ENCODE measurements at regions of chr2 and their contacts with region 1.

Region 1: DNA sequence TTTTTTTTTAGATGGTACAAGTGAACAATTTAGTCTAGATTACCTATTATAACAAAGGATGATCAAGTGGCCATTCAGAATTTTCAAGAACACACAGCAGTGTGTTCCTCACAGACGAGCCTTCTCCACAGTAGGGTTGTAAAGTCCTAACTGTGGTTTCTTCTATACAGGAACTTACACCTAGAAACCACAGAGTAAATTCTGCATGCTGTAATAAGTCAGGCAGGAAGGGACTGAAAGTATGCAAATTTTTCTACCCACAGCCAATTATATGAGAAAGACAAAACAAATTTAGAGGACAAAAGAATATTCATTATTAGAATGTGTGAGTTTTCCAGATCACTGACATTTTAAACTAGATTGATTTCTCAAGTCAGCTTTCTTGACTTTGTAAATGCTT is 99.5 kb downstream of the RBMS1 start:
- DNase-seq: no peak
- H3K4me3 Mint-ChIP-seq: peak overlapping the region; percentile 25
- H3K27ac Mint-ChIP-seq: peak overlapping the region; percentile 64
- H3K4me1 Mint-ChIP-seq: peaks cover 58% of the 10 kb centered on the region
- H3K27me3 Mint-ChIP-seq: no peaks in the 10 kb centered on the region

Region 2: DNA sequence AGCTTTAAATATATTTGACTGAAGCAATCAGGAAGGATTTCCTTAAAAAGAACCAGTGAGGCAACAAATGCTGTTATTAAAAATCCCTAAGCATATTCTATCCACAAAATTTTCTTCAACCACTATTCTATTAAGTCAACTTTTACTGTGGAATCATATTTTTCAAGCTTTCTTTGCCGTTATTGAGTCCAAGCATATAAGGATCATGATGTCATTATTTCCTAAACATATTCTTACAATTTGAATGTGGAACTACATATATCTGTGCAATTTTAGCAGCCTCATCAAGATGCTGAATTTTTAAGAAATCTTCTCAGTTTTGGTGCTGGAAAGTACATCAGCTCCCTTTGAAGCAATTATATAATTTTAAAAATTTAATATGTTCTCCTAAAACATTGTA is 1918.7 kb after region 1 on chr2:
- CTCF ChIA-PET with region 1: no interaction called
- POLR2A ChIA-PET with region 1: no interaction called
- intact Hi-C with region 1: loop called (anchors 5 kb)
- DNase-seq: no peak
- H3K4me3 Mint-ChIP-seq: no peak overlapping the region
- H3K27ac Mint-ChIP-seq: no peak overlapping the region
- H3K4me1 Mint-ChIP-seq: peaks cover 67% of the 10 kb centered on the region
- H3K27me3 Mint-ChIP-seq: no peaks in the 10 kb centered on the region